Common myeloid progenitor, CD34-positive (primary cell): ENCODE measurements at regions of chr2 and their contacts with region 1.

Region 1: GRCh38 chr2:24971536-24972314 is at the start of gene DNAJC27:
- DNase-seq: peak; percentile 98 to 99 (median 99)
- H3K4me3 ChIP-seq: peak within 1 kb of the TSS; percentile 76 to 94 (median 86)
- H3K27ac ChIP-seq: peak within 1 kb of the TSS; percentile 100
- H3K4me1 ChIP-seq: peaks cover 8 to 23% (median 16%) of the 10 kb centered on the region in 4 experiments
- H3K27me3 ChIP-seq: no peaks in the 10 kb centered on the region

Region 2: GRCh38 chr2:24984912-24985311 is 13.2 kb after region 1 on chr2:
- CTCF ChIA-PET with region 1: interaction called, 17 read pairs
- POLR2A ChIA-PET with region 1: no interaction called
- DNase-seq: peak; percentile 64 to 95 (median 93)
- H3K4me3 ChIP-seq: no peak overlapping the region
- H3K27ac ChIP-seq: peak overlapping the region in 1 of 2 experiments; percentile 40
- H3K4me1 ChIP-seq: peaks cover 0 to 19% (median 9%) of the 10 kb centered on the region in 4 experiments
- H3K27me3 ChIP-seq: no peaks in the 10 kb centered on the region

Region 3: GRCh38 chr2:24993406-24994145 is 21.9 kb after region 1 on chr2:
- CTCF ChIA-PET with region 1: interaction called, 11 read pairs
- POLR2A ChIA-PET with region 1: no interaction called
- DNase-seq: peak in 1 of 3 donors; percentile 21
- H3K4me3 ChIP-seq: no peak overlapping the region
- H3K27ac ChIP-seq: no peak overlapping the region
- H3K4me1 ChIP-seq: peaks cover 0 to 5% (median 0%) of the 10 kb centered on the region in 4 experiments
- H3K27me3 ChIP-seq: no peaks in the 10 kb centered on the region

Region 4: GRCh38 chr2:25131567-25132298 is 160.0 kb after region 1 on chr2:
- CTCF ChIA-PET with region 1: interaction called, 152 read pairs
- POLR2A ChIA-PET with region 1: interaction called, 3 read pairs
- DNase-seq: peak in 2 of 3 donors; percentile 34 to 39
- H3K4me3 ChIP-seq: peak overlapping the region in 6 of 7 experiments; percentile 28 to 72 (median 40)
- H3K27ac ChIP-seq: no peak overlapping the region
- H3K4me1 ChIP-seq: peaks cover 0 to 16% (median 13%) of the 10 kb centered on the region in 4 experiments
- H3K27me3 ChIP-seq: peaks cover 2 to 58% (median 25%) of the 10 kb centered on the region in 5 experiments

Region 5: GRCh38 chr2:25165992-25166875 is 194.5 kb after region 1 on chr2:
- CTCF ChIA-PET with region 1: interaction called, 15 read pairs
- POLR2A ChIA-PET with region 1: no interaction called
- DNase-seq: peak; percentile 48 to 55 (median 49)
- H3K4me3 ChIP-seq: no peak overlapping the region
- H3K27ac ChIP-seq: no peak overlapping the region
- H3K4me1 ChIP-seq: peaks cover 0 to 23% (median 11%) of the 10 kb centered on the region in 4 experiments
- H3K27me3 ChIP-seq: peaks cover 18 to 58% (median 31%) of the 10 kb centered on the region in 5 experiments

Region 6: DNA sequence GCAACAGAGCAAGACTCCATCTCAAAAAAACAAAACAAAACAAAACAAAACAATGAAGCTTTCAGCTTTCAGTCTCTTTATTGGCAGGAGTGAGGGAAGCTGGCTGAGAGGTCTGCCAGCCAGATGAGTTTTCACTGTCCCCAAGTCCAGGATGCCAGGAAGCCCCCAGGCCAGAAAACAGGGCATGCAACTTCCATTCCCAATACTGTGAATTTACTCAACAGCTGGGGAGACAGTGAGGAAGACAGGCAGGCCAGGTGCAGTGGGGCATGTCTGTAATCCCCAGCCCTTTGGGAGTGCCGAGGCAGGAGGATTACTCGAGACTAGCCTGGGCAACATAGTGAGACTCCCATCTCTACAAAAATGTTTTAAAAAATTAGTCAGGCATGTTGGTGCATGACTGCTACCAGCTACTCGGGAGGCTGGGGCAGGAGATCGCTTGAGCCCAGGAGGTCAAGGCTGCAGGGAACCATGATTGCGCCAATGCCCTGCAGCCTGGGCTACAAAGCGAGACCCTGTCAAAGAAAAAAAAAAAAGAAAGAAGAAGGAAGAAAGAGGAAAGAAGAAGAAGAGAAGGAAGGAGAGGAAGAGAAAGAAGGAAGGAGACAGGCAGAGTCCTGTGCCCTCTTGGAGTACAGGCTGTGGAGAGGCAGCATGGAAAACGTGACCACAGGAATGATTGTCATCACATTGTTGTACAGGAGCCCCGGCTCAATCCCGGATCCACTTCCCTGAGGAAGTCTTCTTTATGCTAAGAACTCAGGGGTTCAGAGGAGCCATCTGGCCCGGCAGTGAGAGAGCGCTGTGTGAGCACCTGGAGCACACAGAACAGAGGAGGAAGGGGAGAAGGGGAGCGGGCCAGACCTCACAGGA is 225.8 kb after region 1 on chr2:
- CTCF ChIA-PET with region 1: interaction called, 55 read pairs
- POLR2A ChIA-PET with region 1: no interaction called
- DNase-seq: no peak
- H3K4me3 ChIP-seq: no peak overlapping the region
- H3K27ac ChIP-seq: no peak overlapping the region
- H3K4me1 ChIP-seq: peaks cover 0 to 22% (median 17%) of the 10 kb centered on the region in 4 experiments
- H3K27me3 ChIP-seq: no peaks in the 10 kb centered on the region

Region 7: DNA sequence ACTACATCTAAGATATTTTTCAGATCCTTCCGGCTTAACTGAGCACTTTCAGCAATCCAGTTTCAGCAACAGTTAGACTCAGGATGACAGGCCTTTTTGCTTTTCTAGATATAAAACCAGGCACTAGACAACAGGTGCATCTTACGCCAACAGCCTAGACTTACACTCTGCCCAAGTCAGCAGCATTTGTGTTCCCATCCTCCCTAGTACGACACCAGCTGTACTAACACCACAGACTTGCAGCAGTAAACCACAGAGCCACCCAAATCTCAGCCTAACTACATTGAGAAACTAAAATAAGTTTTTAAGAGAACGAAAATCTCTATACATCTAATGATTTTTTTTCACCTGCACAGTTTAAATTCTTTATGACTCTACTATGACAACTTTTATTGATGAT is 459.9 kb after region 1 on chr2:
- CTCF ChIA-PET with region 1: no interaction called
- POLR2A ChIA-PET with region 1: no interaction called
- DNase-seq: no peak
- H3K4me3 ChIP-seq: no peak overlapping the region
- H3K27ac ChIP-seq: no peak overlapping the region
- H3K4me1 ChIP-seq: no peaks in the 10 kb centered on the region
- H3K27me3 ChIP-seq: no peaks in the 10 kb centered on the region